ENCODE measurements at regions of chr4 and their contacts with region 1.

Region 1: DNA sequence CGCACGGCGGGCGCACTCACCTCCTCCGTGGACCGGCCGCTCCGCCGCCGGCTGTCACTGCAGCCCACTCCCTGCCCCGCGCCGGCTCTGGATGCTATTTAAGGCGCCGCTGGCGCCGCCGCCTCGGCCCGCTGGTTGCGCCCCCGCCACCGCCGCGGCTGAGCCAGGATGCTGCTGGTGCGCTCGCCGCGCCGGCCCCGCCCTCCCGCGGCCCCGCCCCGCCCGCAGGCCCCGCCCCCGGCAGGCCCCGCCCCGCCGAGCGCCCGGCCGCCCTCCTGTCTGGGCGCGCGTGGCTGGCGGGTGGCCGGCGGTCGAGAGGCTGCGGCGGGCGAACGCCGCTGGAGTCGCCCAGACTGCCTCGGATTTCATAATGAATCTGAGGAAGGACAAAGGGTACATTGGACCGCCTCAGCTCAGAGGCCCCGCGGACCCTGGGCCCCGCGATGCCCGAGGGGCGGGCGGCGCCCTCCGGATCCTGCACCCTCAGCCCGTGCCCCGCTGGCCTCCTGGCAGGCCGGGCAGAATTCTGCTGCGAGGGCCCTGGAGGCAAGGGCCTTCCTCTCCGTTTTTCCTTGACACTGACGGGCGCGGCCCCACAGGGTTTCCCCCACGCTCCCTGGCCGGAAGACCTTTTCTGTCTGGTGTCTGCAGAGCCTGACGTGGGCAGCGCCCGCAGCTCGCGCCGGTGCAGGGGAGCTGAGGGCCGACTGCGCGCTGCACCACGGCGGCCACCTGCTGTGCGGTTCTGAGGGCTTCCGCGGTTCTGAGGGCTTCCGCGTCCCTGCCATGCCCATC is at the start of gene ACSL1:
- DNase-seq: peak; percentile 58 to 90 (median 72)
- ATAC-seq: peak; percentile 85
- H3K4me3 ChIP-seq: peak within 1 kb of the TSS; percentile 59
- H3K4me3 Mint-ChIP-seq: peak within 1 kb of the TSS; percentile 97
- H3K27ac ChIP-seq: peak within 1 kb of the TSS in 1 of 2 donors; percentile 31
- H3K27ac Mint-ChIP-seq: peak within 1 kb of the TSS; percentile 92
- H3K4me1 ChIP-seq: peaks cover 23% of the 10 kb centered on the region
- H3K4me1 Mint-ChIP-seq: peaks cover 40% of the 10 kb centered on the region
- H3K27me3 ChIP-seq: no peaks in the 10 kb centered on the region
- H3K27me3 Mint-ChIP-seq: no peaks in the 10 kb centered on the region
- CTCF ChIP-seq: no peak
- total RNA-seq, gene ACSL1: 12.4 to 12.5 TPM

Region 2: GRCh38 chr4:182917182-182918043 is 1908.7 kb before region 1 on chr4 and contains the start of gene DCTD:
- CTCF ChIA-PET with region 1: no interaction called
- POLR2A ChIA-PET with region 1: no interaction called
- intact Hi-C with region 1: loop called in 1 of 2 experiments (anchors 10 kb)
- DNase-seq: peak; percentile 54 to 90 (median 78)
- ATAC-seq: peak; percentile 78
- H3K4me3 ChIP-seq: peak within 1 kb of the TSS; percentile 85
- H3K4me3 Mint-ChIP-seq: peak within 1 kb of the TSS; percentile 93
- H3K27ac ChIP-seq: peak within 1 kb of the TSS; percentile 89 to 96
- H3K27ac Mint-ChIP-seq: peak within 1 kb of the TSS; percentile 89
- H3K4me1 ChIP-seq: peaks cover 42% of the 10 kb centered on the region
- H3K4me1 Mint-ChIP-seq: peaks cover 48% of the 10 kb centered on the region
- H3K27me3 ChIP-seq: no peaks in the 10 kb centered on the region
- H3K27me3 Mint-ChIP-seq: no peaks in the 10 kb centered on the region
- CTCF ChIP-seq: peak; percentile 42
- total RNA-seq, gene DCTD: 49.4 to 54.3 TPM

Region 3: GRCh38 chr4:183659029-183659871 is 1166.8 kb before region 1 on chr4 and contains the starts of genes RWDD4 and TRAPPC11:
- CTCF ChIA-PET with region 1: no interaction called
- POLR2A ChIA-PET with region 1: no interaction called
- intact Hi-C with region 1: loop called in 1 of 2 experiments (anchors 10 kb)
- DNase-seq: peak; percentile 92 to 99 (median 94)
- ATAC-seq: peak; percentile 99
- H3K4me3 ChIP-seq: peak within 1 kb of the TSS; percentile 81
- H3K4me3 Mint-ChIP-seq: peak within 1 kb of the TSS; percentile 94
- H3K27ac ChIP-seq: peak within 1 kb of the TSS; percentile 74 to 79
- H3K27ac Mint-ChIP-seq: peak within 1 kb of the TSS; percentile 93
- H3K4me1 ChIP-seq: peaks cover 24% of the 10 kb centered on the region
- H3K4me1 Mint-ChIP-seq: peaks cover 56% of the 10 kb centered on the region
- H3K27me3 ChIP-seq: no peaks in the 10 kb centered on the region
- H3K27me3 Mint-ChIP-seq: no peaks in the 10 kb centered on the region
- CTCF ChIP-seq: no peak
- total RNA-seq, gene RWDD4: 9.9 to 10.5 TPM
- total RNA-seq, gene TRAPPC11: 14.7 to 19.2 TPM

Region 4: GRCh38 chr4:184728858-184729257 is 97.2 kb before region 1 on chr4:
- CTCF ChIA-PET with region 1: no interaction called
- POLR2A ChIA-PET with region 1: interaction called, 9 read pairs
- intact Hi-C with region 1: loop called in 1 of 2 experiments (anchors 2 kb)
- DNase-seq: no peak
- ATAC-seq: no peak
- H3K4me3 ChIP-seq: no peak overlapping the region
- H3K4me3 Mint-ChIP-seq: no peak overlapping the region
- H3K27ac ChIP-seq: no peak overlapping the region
- H3K27ac Mint-ChIP-seq: no peak overlapping the region
- H3K4me1 ChIP-seq: peaks cover 10% of the 10 kb centered on the region
- H3K4me1 Mint-ChIP-seq: peaks cover 6% of the 10 kb centered on the region
- H3K27me3 ChIP-seq: no peaks in the 10 kb centered on the region
- H3K27me3 Mint-ChIP-seq: no peaks in the 10 kb centered on the region
- CTCF ChIP-seq: no peak

Region 5: DNA sequence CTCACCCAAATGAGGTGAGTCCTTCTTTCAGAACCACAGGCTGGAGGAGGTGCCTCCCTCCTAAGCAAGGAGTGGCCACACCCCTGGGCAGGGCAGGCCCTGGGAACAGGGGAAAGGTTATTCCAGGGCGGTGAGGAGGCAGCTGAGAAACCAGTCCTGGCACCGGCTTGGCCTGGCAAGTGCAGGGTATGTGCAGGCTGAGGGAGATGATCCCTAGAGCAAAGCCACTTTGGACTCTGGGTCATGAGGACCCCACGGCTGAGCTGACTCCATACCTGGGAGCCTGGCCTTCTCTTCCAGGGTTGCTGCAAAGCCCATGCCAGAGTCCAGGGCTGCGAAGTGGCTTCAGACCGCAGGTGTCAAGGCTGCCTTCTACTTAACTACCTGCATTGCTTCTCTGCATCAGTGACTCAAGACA is 142.7 kb after region 1 on chr4:
- CTCF ChIA-PET with region 1: no interaction called
- POLR2A ChIA-PET with region 1: no interaction called
- intact Hi-C with region 1: loop called in 1 of 2 experiments (anchors 10 kb)
- DNase-seq: no peak
- ATAC-seq: no peak
- H3K4me3 ChIP-seq: no peak overlapping the region
- H3K4me3 Mint-ChIP-seq: no peak overlapping the region
- H3K27ac ChIP-seq: no peak overlapping the region
- H3K27ac Mint-ChIP-seq: peak overlapping the region; percentile 85
- H3K4me1 ChIP-seq: no peaks in the 10 kb centered on the region
- H3K4me1 Mint-ChIP-seq: peaks cover 9% of the 10 kb centered on the region
- H3K27me3 ChIP-seq: no peaks in the 10 kb centered on the region
- H3K27me3 Mint-ChIP-seq: peaks cover 24% of the 10 kb centered on the region
- CTCF ChIP-seq: no peak

Region 6: GRCh38 chr4:185425647-185426352 is 599.7 kb after region 1 on chr4 and contains the start of gene UFSP2:
- CTCF ChIA-PET with region 1: no interaction called
- POLR2A ChIA-PET with region 1: no interaction called
- intact Hi-C with region 1: loop called in 1 of 2 experiments (anchors 10 kb)
- DNase-seq: peak; percentile 78 to 97 (median 88)
- ATAC-seq: peak; percentile 85
- H3K4me3 ChIP-seq: peak within 1 kb of the TSS; percentile 99
- H3K4me3 Mint-ChIP-seq: peak within 1 kb of the TSS; percentile 94
- H3K27ac ChIP-seq: peak within 1 kb of the TSS; percentile 88 to 99
- H3K27ac Mint-ChIP-seq: peak within 1 kb of the TSS; percentile 91
- H3K4me1 ChIP-seq: peaks cover 18% of the 10 kb centered on the region
- H3K4me1 Mint-ChIP-seq: peaks cover 31% of the 10 kb centered on the region
- H3K27me3 ChIP-seq: no peaks in the 10 kb centered on the region
- H3K27me3 Mint-ChIP-seq: peaks cover 6% of the 10 kb centered on the region
- CTCF ChIP-seq: no peak
- total RNA-seq, gene UFSP2: 14.5 to 16.6 TPM

Measured in CD4-positive, alpha-beta T cell (primary cell).